HEK293T (cell line): ENCODE measurements at regions of chr19 and their contacts with region 1.

Region 1: DNA sequence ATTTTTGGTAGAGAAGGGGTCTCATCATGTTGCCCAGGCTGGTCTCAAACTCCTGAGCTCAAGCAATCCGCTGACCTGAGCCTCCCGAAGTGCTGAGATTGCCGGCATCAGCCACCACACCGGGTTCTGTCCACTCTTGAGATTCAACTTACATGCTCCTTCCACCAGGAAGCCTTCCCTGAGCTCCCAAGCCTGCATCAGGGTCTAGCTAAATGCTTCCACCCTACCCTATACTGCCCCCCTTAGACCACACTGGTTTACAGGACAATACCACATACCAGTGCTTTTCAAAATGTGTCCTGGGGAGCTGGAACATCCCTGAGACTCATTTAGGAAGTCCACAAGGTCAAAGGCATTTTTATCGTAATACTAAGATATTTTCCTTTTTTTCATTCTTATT is 15.1 kb upstream of the CACNG8 start:
- DNase-seq: peak; percentile 47

Region 2: DNA sequence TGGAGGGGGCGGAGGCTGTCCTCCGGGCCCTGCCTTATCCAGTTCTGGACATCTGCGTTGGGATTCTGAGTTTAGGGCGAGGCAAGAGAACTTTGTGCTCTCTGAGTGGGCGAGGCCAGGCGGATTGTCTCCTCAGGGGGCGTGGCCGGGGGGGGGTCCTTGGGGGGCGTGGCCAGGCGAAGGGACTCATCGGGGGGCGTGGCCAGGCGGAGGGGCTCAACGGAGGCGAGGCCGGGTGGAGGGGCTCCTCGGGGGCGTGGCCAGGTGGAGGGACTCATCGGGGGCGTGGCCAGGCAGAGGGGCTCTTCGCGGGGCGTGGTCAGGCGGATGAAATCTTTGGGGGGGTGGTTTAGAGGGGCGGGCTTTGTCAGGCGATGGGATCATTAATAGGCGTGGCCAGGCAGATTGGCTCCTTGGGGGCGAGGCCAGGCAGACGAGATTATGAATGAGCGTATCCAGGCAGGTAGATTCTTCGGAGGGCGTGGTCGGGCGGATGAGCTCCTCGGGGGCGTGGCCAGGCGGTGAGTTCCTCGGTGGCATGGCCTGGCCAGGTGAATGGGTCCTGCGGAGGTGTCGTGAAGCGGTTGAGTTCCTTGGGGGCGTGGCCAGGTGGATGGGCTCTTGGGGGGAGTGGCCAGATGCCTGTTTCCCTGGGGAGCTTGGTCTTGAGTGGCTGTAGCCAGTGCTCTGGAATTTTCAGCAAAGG is 48.8 kb before region 1 on chr19:
- CTCF ChIA-PET with region 1: interaction called, 11 read pairs
- POLR2A ChIA-PET with region 1: no interaction called
- DNase-seq: peak; percentile 88

Region 3: GRCh38 chr19:53971673-53972072 is 24.0 kb after region 1 on chr19:
- CTCF ChIA-PET with region 1: no interaction called
- POLR2A ChIA-PET with region 1: no interaction called
- DNase-seq: no peak

Region 4: DNA sequence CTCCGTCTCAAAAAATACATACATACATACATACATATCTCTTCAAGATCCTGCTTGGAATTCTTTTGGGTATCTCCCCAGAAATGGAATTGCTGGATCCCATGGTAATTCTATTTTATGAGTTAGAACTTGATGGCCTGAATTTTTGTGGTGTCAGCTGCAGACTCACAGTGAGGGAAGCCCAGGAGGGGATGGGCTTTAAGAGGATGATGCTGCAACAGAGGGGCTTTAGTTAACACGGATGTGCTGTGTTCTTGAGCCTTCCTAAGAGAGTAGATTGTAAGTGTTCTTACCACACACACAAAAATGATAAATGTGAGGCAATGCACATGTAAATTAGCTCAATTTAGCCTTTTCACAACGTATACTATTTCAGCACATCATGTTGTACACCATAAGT is 75.6 kb after region 1 on chr19:
- CTCF ChIA-PET with region 1: interaction called, 11 read pairs
- POLR2A ChIA-PET with region 1: no interaction called
- DNase-seq: no peak

Region 5: DNA sequence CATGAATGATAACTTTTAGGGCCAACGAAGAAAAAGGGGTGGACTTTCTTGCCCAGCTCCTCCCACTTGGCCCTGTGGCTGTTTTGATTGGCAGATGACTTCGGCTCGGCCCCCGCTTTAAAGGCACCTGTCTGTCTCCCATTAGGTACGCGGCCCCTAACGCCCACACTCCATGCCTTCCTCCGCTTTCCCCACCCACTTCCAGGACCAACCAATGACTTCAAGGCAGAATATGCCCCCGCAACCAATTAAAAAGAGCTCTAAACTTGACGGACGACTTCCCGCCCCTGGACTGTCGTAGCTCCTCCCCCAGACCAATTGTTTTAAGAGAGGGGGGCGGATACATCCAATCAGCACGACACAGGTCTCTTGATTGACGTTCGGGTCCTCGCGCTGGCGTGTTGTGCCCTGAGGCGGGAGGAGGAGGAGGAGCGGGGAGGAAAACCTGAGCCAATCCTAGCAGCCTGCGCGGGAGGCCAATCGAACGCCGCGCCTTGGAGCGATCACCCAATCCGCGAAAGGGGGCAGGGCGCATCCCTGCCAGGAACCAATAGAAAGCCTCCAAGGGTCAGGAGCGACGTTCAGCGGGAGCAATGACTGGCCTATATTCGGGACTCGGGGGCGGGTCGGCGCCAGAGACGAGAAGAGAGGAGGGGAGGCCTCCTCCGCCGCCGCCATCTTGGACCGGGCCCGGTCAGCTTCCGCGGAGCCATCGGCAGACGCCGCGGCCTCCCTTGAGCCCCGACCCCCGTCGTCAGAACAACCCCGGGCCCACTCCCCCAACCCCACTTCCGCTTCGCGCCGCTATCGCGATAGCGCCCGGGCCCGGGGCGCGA is 189.7 kb after region 1 on chr19 and contains the start of gene CNOT3:
- CTCF ChIA-PET with region 1: no interaction called
- POLR2A ChIA-PET with region 1: no interaction called
- DNase-seq: peak; percentile 96